Endothelial cell of umbilical vein (primary cell): ENCODE measurements at regions of chr1 and their contacts with region 1.

Region 1: DNA sequence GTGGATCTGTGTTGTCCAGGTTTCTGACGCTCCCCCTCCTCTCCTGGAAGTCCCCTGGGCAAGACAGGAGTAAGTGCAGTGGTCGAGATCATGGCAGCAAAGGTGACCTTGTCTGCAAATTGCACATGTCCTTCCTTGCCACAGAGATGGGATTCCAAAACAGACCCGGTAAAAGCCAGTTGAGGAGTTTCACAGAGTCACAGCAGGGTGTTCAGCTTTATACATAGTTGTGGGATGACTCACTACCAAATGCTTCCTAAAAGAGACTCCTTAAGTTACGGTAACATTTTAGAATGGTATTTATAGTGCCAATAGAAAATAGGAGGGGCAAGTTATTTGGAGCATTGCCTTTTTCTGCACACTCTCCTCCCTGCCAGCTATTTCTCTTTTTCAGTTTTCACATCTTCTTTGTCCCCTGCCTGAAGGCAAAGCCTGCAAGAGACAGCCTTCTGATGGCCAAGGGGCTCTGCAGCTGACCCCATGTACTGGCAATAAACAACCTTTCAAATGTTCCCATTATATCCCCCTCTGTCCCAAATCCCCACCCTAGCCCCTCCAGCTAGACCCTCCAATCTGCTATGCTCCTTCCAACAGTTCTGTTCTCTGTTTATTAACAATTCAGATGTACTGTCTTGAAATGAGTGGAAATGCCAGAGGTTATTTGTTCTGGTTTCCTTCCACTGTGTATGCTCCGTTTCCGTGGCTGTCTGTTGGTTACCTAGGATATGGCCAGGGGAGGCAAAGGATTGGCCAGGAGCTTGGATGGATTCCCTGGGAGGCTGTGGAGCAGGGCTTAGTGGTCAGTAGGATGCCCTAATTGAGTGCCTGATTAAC is 115.0 kb downstream of the TGFB2 start:
- DNase-seq: peak; percentile 82
- H3K4me3 ChIP-seq: peak overlapping the region in 1 of 3 experiments; percentile 44
- H3K27ac ChIP-seq: peak overlapping the region; percentile 98
- H3K4me1 ChIP-seq: peaks cover 44% of the 10 kb centered on the region
- H3K27me3 ChIP-seq: no peaks in the 10 kb centered on the region
- CTCF ChIP-seq: no peak
- POLR2A ChIP-seq: no peak

Region 2: GRCh38 chr1:218339267-218339831 is 120.7 kb before region 1 on chr1:
- CTCF ChIA-PET with region 1: no interaction called
- POLR2A ChIA-PET with region 1: no interaction called
- dilution Hi-C with region 1: no loop called
- intact Hi-C with region 1: no loop called
- DNase-seq: peak; percentile 74
- H3K4me3 ChIP-seq: no peak overlapping the region
- H3K27ac ChIP-seq: no peak overlapping the region
- H3K4me1 ChIP-seq: no peaks in the 10 kb centered on the region
- H3K27me3 ChIP-seq: no peaks in the 10 kb centered on the region
- CTCF ChIP-seq: peak; percentile 41 to 48
- POLR2A ChIP-seq: no peak

Region 3: GRCh38 chr1:218473522-218473921 is 13.4 kb after region 1 on chr1:
- CTCF ChIA-PET with region 1: interaction called, 4 read pairs
- POLR2A ChIA-PET with region 1: no interaction called
- dilution Hi-C with region 1: no loop called
- intact Hi-C with region 1: loop called (anchors 1 kb)
- DNase-seq: peak; percentile 79
- H3K4me3 ChIP-seq: no peak overlapping the region
- H3K27ac ChIP-seq: peak overlapping the region; percentile 74
- H3K4me1 ChIP-seq: peaks cover 28% of the 10 kb centered on the region
- H3K27me3 ChIP-seq: no peaks in the 10 kb centered on the region
- CTCF ChIP-seq: no peak
- POLR2A ChIP-seq: peak; percentile 46

Region 4: DNA sequence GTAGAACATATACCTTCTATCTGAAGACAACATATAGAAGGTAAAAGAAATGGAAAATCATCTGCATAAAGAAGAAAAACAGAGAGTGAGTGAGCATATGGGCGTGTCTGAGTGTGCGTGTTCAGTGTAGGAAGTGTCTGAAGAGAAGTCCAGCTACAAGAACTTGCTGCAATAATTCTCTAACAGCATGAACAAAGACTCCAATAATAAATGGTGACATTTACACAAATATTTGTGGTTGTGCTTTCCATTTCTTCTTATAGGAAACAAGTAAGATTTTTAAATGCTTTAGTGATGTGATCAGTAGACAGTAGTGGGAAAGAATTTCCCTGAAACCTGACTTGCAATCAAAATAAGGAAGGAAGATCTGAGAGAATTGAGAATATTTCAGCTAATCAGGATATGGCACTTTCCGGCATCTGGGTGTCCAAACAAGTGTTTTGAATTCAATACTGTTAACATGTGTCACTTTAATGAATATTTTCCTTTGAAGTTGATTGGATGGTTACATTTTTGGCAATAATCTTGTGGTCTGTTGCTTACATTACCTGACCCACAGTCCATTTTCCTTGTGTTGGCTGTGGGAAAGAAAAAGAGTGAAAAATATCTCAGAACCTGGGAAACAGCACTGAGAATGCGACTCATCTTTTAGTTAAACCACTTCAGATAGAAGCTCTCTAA is 39.1 kb after region 1 on chr1:
- CTCF ChIA-PET with region 1: no interaction called
- POLR2A ChIA-PET with region 1: no interaction called
- dilution Hi-C with region 1: no loop called
- intact Hi-C with region 1: loop called (anchors 1 kb)
- DNase-seq: peak; percentile 83
- H3K4me3 ChIP-seq: peak overlapping the region in 1 of 3 experiments; percentile 60
- H3K27ac ChIP-seq: peak overlapping the region; percentile 93
- H3K4me1 ChIP-seq: peaks cover 29% of the 10 kb centered on the region
- H3K27me3 ChIP-seq: no peaks in the 10 kb centered on the region
- CTCF ChIP-seq: no peak
- POLR2A ChIP-seq: no peak